ENCODE measurements at regions of chr14 and their contacts with region 1.

Region 1: DNA sequence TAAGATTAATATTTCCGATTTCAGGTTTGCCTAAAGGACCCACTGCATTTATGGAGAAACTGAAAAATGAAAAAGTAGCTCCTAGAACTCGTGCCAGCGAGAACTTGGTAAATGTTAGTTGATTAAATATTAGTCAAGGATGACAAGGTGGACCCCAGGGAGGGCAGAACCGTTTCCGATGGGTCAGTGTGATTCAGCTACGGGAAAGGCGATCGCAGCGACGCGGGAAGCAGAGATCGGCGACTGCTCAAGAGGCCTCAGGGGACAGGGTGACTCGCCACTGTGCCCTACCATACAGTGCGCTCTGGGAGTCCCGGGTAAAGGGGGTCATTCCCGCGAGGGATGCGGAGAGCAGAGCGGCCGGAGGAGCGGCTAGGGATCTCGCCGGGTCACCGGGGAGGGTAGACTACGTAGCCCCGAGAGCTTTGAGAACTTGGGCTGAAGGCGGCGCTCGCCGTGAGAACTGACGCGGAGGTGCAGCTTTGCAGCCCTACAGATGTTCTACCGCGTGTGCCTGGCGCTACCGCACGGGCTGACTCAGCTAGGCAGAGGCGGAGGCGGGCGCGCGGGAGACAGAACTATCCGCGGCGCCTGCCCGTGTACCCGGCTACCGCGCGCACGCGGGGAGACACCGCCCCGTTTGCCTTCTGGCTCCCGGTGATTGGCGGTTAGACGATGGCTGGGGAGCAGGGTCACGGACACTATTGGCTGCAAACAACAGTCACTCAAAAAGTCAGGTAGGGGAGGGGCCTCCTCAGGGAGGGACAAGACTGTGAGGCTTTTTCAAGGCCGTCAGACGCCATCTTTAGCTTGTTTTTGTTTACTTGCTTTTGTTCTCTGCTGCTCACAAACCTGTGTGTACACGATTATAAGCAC is 3.2 kb downstream of the C14orf93 start:
- DNase-seq: peak; percentile 98
- ATAC-seq: peak; percentile 99
- H3K4me3 Mint-ChIP-seq: peak overlapping the region; percentile 94
- H3K27ac Mint-ChIP-seq: peak overlapping the region; percentile 98
- H3K4me1 Mint-ChIP-seq: peaks cover 51% of the 10 kb centered on the region
- H3K27me3 Mint-ChIP-seq: no peaks in the 10 kb centered on the region

Region 2: GRCh38 chr14:22908601-22909000 is 98.2 kb before region 1 on chr14:
- CTCF ChIA-PET with region 1: no interaction called
- POLR2A ChIA-PET with region 1: no interaction called
- DNase-seq: no peak
- ATAC-seq: no peak
- H3K4me3 Mint-ChIP-seq: no peak overlapping the region
- H3K27ac Mint-ChIP-seq: no peak overlapping the region
- H3K4me1 Mint-ChIP-seq: peaks cover 7% of the 10 kb centered on the region
- H3K27me3 Mint-ChIP-seq: no peaks in the 10 kb centered on the region

Region 3: DNA sequence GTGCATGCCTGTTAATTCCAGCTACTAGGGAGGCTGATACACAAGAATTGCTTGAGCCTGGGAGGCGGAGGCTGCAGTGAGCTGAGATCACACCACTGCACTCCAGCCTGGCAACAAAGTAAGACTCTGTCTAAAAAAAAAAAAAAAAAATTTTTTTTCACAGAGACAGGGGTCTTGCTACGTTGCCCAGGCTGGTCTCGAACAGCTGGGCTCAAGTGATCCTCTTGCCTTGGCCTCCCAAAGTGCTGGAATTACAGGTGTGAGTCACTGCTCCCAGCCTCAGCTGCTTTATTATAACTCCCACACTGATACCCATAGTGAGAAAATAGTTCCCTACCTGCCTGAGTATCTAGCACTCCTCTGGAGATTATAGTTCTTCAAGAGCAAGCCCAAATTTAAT is 61.1 kb before region 1 on chr14:
- CTCF ChIA-PET with region 1: no interaction called
- POLR2A ChIA-PET with region 1: no interaction called
- DNase-seq: no peak
- ATAC-seq: no peak
- H3K4me3 Mint-ChIP-seq: no peak overlapping the region
- H3K27ac Mint-ChIP-seq: no peak overlapping the region
- H3K4me1 Mint-ChIP-seq: no peaks in the 10 kb centered on the region
- H3K27me3 Mint-ChIP-seq: no peaks in the 10 kb centered on the region

Region 4: GRCh38 chr14:23025151-23025814 is 18.5 kb after region 1 on chr14:
- CTCF ChIA-PET with region 1: interaction called, 21 read pairs
- POLR2A ChIA-PET with region 1: interaction called, 9 read pairs
- DNase-seq: no peak
- ATAC-seq: no peak
- H3K4me3 Mint-ChIP-seq: no peak overlapping the region
- H3K27ac Mint-ChIP-seq: peak overlapping the region; percentile 40
- H3K4me1 Mint-ChIP-seq: peaks cover 50% of the 10 kb centered on the region
- H3K27me3 Mint-ChIP-seq: no peaks in the 10 kb centered on the region

Region 5: DNA sequence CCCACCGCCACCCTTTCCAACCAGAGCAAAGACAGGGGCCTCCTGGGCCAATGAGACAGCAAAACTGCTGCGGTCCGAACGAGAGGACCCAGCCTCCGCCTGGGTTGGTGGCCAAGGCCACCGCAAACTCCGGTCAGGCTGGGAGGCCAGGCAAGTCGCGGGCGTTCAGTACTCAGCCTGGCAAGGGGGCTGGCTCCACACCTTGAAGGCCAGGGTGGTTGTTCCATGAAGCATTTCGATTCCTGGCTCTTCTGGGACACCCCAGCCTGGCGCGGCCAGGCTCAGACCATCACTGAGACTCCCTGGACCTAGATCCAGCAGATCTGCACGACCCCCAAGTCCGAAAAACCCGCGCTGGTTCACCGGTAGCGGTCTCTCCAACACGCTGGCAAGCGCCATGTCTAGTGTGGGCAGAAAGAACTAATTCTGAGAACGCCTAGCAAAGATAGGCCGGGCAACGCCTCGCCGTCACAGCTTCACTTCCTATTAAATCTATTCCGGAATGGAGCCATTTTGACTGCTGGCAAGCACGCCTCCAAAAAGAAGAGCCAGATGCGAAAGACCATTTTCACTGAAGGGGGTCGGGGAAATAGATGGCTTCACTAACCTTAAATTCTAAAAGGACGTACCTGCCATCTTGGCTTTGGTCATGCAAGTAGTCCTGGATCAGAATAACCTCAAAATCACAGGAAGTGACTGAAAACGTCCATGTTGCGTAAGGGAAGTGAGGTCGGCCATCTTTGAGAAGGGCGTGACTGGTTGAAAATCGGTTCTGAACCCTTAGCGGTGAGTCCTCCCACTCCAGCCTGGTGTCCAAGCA is 27.9 kb after region 1 on chr14 and contains the start of gene PSMB5:
- CTCF ChIA-PET with region 1: interaction called, 21 read pairs
- POLR2A ChIA-PET with region 1: interaction called, 20 read pairs
- DNase-seq: peak; percentile 95
- ATAC-seq: peak; percentile 97
- H3K4me3 Mint-ChIP-seq: peak within 1 kb of the TSS; percentile 91
- H3K27ac Mint-ChIP-seq: peak within 1 kb of the TSS; percentile 96
- H3K4me1 Mint-ChIP-seq: peaks cover 30% of the 10 kb centered on the region
- H3K27me3 Mint-ChIP-seq: no peaks in the 10 kb centered on the region
- total RNA-seq, gene PSMB5: 64.5 to 74.5 TPM

Measured in activated CD8-positive, alpha-beta T cell treated with anti-CD3 and anti-CD28 coated beads, Interleukin-2, amount 10 ng/mL, durations not matched to agents 7 days and 5 days (primary cell).